CD14-positive monocyte (primary cell): ENCODE measurements at regions of chr10 and their contacts with region 1.

Region 1: DNA sequence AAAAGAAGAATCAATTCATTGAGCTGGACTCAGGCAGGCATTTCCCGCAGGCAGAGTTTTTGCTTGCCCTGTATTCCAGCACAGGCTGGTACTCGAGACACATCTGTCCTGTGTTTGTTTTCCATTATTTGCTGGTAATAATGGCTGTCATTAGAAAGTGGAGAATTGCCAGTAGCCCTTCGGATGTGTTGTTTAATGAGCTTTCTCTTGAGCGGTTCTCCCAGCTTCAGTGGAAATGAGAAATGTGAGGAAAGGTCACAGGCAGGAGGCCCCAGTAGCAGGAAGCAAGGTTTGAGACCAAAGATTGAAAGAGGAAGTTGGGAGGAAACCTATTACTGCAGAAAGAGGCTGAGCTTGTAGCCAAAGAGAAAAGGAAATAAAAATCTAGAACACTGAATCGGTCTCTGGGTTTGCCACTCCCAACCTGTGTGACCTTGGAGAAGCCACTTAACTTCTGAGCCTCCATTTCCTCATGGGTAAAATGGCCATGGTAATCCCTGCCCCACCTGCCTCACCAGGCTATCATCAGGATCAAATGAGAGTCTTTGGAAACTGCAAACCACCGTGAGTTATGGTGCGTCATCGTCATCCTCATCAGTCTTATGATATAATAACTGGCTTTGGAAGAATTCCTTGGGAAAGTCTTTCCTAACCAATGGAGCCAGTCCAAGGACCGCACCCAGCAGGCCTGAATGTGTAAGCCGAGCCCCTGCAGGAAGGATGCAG is 67.7 kb downstream of the TACR2 start:
- DNase-seq: peak; percentile 50 to 75 (median 65)
- H3K4me3 ChIP-seq: peak overlapping the region in 1 of 3 experiments; percentile 65
- H3K4me3 Mint-ChIP-seq: peak overlapping the region; percentile 49 to 76
- H3K27ac ChIP-seq: peak overlapping the region; percentile 82 to 83
- H3K27ac Mint-ChIP-seq: peak overlapping the region; percentile 85 to 96 (median 93)
- H3K4me1 ChIP-seq: peaks cover 67 to 71% of the 10 kb centered on the region in 2 donors
- H3K4me1 Mint-ChIP-seq: peaks cover 75% of the 10 kb centered on the region
- H3K27me3 ChIP-seq: no peaks in the 10 kb centered on the region
- H3K27me3 Mint-ChIP-seq: peaks cover 0 to 4% (median 0%) of the 10 kb centered on the region in 3 donors
- CTCF ChIP-seq: no peak

Region 2: DNA sequence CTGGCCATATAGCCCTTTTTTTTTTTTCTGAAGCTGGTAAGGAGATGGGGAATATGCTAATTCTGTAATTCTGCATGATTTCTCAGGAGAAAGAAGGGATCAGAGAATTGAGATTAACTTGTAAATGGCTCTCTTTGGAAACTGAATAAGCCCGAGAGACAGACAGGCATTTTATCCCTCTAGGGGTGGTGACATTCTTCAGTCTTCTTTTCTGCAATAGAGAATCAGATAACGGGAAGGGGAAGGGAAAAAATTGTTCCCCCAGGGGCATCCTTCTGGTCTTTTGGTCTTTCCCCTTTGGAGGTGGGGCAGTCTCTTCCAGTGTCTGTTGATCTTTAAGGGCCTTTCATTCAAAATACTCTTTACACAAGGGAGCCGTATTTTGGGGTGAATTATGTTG is 36.4 kb before region 1 on chr10:
- intact Hi-C with region 1: loop called in 1 of 2 experiments (anchors 5 kb)
- DNase-seq: no peak
- H3K4me3 ChIP-seq: no peak overlapping the region
- H3K4me3 Mint-ChIP-seq: no peak overlapping the region
- H3K27ac ChIP-seq: no peak overlapping the region
- H3K27ac Mint-ChIP-seq: no peak overlapping the region
- H3K4me1 ChIP-seq: peaks cover 6% of the 10 kb centered on the region in 2 donors
- H3K4me1 Mint-ChIP-seq: peaks cover 5% of the 10 kb centered on the region
- H3K27me3 ChIP-seq: no peaks in the 10 kb centered on the region
- H3K27me3 Mint-ChIP-seq: peaks cover 0 to 2% (median 2%) of the 10 kb centered on the region in 3 donors
- CTCF ChIP-seq: no peak

Region 3: DNA sequence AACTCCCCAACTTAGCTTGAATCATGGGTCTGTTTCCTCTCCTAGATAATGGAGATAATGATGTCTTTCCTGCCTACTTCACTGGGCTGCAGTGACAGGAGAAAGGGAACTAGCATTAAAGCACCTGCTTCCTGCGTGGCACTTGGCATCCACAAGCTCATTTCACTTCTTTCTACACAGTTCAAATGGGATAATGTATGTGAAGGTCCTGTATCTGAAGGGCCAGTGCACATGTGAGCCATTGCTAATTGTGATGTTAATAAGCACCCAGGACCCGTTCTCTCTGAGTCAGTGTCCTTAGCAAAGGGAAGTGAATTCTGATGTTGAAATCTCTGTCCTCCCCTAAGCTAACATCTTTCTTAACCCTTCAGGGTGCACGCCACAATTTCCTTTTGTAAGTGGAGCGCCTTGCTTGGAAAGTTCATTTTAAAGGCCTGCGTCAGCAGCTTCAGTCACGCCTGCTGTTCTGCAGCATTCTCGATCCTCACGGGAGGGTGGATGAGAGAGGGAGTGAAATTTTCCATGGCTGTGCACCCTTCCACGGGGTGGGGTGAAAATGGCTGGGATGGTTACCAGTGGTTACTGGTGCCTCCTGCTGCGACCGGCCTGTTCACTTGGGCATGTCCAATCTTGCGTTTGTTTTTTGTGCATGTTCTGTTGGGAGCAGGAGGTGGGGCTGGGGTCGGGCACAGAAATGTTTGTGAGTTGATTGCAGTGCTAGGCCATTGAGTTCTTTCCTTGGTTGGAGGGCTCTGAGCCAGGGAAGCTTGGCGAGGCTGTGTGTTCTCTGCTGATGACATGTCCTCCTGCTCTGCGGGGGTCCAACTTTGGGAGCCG is 11.5 kb before region 1 on chr10:
- intact Hi-C with region 1: loop called in 1 of 2 experiments (anchors 1 kb)
- DNase-seq: peak; percentile 87 to 96 (median 95)
- H3K4me3 ChIP-seq: peak overlapping the region; percentile 5 to 69 (median 13)
- H3K4me3 Mint-ChIP-seq: peak overlapping the region; percentile 52 to 86
- H3K27ac ChIP-seq: peak overlapping the region; percentile 65 to 82
- H3K27ac Mint-ChIP-seq: peak overlapping the region; percentile 93 to 96 (median 94)
- H3K4me1 ChIP-seq: peaks cover 76 to 80% of the 10 kb centered on the region in 2 donors
- H3K4me1 Mint-ChIP-seq: peaks cover 87% of the 10 kb centered on the region
- H3K27me3 ChIP-seq: no peaks in the 10 kb centered on the region
- H3K27me3 Mint-ChIP-seq: no peaks in the 10 kb centered on the region
- CTCF ChIP-seq: no peak

Region 4: DNA sequence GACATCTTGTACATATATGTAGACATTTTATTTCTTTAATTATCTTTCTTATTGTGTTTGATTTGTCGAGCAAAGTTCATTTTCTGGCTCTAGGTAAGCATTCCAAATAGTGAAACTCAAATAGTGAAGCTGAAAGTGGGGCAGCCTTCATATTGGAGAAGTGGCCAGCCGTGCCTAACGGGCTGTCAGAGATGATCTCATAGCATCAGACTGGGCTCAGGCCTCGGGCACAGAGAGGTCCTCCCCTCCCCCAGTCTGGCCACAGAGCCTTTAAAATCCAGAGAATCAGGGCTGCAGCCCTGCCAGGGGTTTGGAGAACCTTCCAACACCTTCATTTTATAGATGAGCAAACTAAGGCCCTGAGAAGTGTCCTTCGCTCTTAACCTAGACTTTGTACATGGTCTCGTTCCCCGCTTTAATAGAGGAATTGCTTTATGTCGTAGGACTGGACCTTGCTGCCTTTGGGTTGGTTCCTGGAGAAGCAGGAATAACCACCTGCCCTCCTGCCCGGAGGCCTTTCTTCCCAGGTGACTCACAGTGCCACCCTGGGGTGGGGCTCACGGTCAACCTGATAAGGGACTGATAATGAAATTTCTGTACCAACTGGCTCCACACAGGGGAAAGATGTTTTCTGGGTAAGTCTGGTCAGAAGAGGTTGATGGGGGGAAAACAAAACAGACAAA is 109.6 kb after region 1 on chr10:
- intact Hi-C with region 1: no loop called
- DNase-seq: peak in 1 of 3 donors; percentile 18
- H3K4me3 ChIP-seq: no peak overlapping the region
- H3K4me3 Mint-ChIP-seq: no peak overlapping the region
- H3K27ac ChIP-seq: no peak overlapping the region
- H3K27ac Mint-ChIP-seq: no peak overlapping the region
- H3K4me1 ChIP-seq: no peaks in the 10 kb centered on the region
- H3K4me1 Mint-ChIP-seq: peaks cover 6% of the 10 kb centered on the region
- H3K27me3 ChIP-seq: peaks cover 0 to 2% of the 10 kb centered on the region in 2 donors
- H3K27me3 Mint-ChIP-seq: peaks cover under 1 to 5% (median 2%) of the 10 kb centered on the region in 3 donors
- CTCF ChIP-seq: no peak